ENCODE measurements at regions of chr17 and their contacts with region 1.

Region 1: GRCh38 chr17:80663781-80664206 is 119.2 kb downstream of the RPTOR start:
- DNase-seq: peak; percentile 62
- H3K4me3 Mint-ChIP-seq: no peak overlapping the region
- H3K27ac Mint-ChIP-seq: peak overlapping the region; percentile 60
- H3K4me1 Mint-ChIP-seq: peaks cover 58% of the 10 kb centered on the region
- H3K27me3 Mint-ChIP-seq: no peaks in the 10 kb centered on the region

Region 2: GRCh38 chr17:80649678-80650672 is 13.8 kb before region 1 on chr17:
- CTCF ChIA-PET with region 1: interaction called, 4 read pairs
- POLR2A ChIA-PET with region 1: interaction called, 3 read pairs
- intact Hi-C with region 1: loop called (anchors 2 kb)
- DNase-seq: peak; percentile 91
- H3K4me3 Mint-ChIP-seq: no peak overlapping the region
- H3K27ac Mint-ChIP-seq: peak overlapping the region; percentile 69
- H3K4me1 Mint-ChIP-seq: peaks cover 70% of the 10 kb centered on the region
- H3K27me3 Mint-ChIP-seq: no peaks in the 10 kb centered on the region

Region 3: DNA sequence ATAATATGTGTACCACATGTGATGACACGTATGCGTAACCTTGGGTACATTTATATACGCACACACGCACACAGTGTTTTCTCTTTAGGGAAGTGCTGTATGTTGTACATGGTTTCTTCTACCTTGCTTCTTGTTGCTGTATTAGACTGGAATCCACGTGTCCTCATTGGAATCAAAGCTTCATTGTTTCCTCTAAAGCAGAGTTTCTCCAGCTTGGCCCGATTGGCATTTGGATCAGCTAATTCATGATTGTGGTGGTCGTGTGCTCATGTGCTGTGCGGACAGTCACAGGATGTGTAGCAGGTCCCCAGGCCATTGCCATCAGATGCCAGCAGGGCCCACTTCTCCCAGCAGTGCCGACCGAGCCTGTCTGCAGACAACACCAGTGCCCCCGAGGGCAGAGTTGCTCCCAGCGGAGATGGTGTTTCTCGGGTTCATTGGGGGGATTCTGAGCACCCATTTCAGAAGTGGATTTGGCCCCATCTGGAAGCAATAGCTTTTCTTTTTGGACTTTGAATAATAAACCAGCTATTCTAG is 29.2 kb after region 1 on chr17:
- CTCF ChIA-PET with region 1: no interaction called
- POLR2A ChIA-PET with region 1: no interaction called
- intact Hi-C with region 1: no loop called
- DNase-seq: no peak
- H3K4me3 Mint-ChIP-seq: no peak overlapping the region
- H3K27ac Mint-ChIP-seq: no peak overlapping the region
- H3K4me1 Mint-ChIP-seq: peaks cover 25% of the 10 kb centered on the region
- H3K27me3 Mint-ChIP-seq: no peaks in the 10 kb centered on the region

Region 4: GRCh38 chr17:80720610-80721577 is 57.1 kb after region 1 on chr17:
- CTCF ChIA-PET with region 1: no interaction called
- POLR2A ChIA-PET with region 1: no interaction called
- intact Hi-C with region 1: loop called (anchors 2 kb)
- DNase-seq: peak; percentile 87
- H3K4me3 Mint-ChIP-seq: peak overlapping the region; percentile 44
- H3K27ac Mint-ChIP-seq: peak overlapping the region; percentile 79
- H3K4me1 Mint-ChIP-seq: peaks cover 36% of the 10 kb centered on the region
- H3K27me3 Mint-ChIP-seq: no peaks in the 10 kb centered on the region

Measured in activated CD4-positive, alpha-beta memory T cell treated with anti-CD3 and anti-CD28 coated beads for 36 hours (primary cell).